Activated CD4-positive, alpha-beta T cell treated with anti-CD3 and anti-CD28 coated beads for 36 hours (primary cell): ENCODE measurements at regions of chr4 and their contacts with region 1.

Region 1: GRCh38 chr4:54971474-54971950 is 153.9 kb downstream of the KDR start:
- DNase-seq: no peak
- ATAC-seq: peak; percentile 71
- H3K4me3 Mint-ChIP-seq: no peak overlapping the region
- H3K27ac Mint-ChIP-seq: no peak overlapping the region
- H3K4me1 Mint-ChIP-seq: no peaks in the 10 kb centered on the region
- H3K27me3 Mint-ChIP-seq: peaks cover 1% of the 10 kb centered on the region

Region 2: DNA sequence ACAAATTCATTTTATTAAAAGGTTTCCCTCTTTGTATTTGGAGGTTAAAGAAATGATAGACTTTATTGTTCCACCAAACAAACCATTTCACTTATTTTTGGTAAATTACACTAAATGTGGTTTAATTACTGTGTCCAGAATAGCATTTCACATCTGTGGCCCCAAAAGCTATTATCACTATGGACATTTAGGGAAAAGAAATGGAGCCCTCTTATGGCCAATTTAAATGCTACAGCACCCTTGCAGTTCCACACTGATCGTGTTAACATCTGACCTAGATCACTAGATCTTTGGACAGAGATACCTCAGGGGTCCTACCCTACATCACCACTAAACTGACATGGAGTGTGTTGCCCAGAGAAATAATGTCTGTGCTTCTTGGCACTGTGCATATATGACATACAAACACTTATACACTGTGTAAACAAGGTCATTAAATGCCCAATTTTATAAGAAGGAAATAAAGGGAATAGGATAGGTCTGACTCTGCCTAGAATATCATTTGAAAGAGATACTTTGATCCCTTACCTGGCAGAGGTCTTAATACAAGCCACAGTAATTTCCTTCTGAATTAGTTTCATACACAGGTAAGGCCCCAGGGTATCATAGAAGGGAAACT is 10.0 kb before region 1 on chr4:
- CTCF ChIA-PET with region 1: interaction called, 16 read pairs
- POLR2A ChIA-PET with region 1: no interaction called
- intact Hi-C with region 1: no loop called
- DNase-seq: no peak
- ATAC-seq: peak; percentile 44
- H3K4me3 Mint-ChIP-seq: no peak overlapping the region
- H3K27ac Mint-ChIP-seq: no peak overlapping the region
- H3K4me1 Mint-ChIP-seq: peaks cover 14% of the 10 kb centered on the region
- H3K27me3 Mint-ChIP-seq: no peaks in the 10 kb centered on the region

Region 3: GRCh38 chr4:55321707-55322264 is 350.3 kb after region 1 on chr4:
- CTCF ChIA-PET with region 1: interaction called, 24 read pairs
- POLR2A ChIA-PET with region 1: no interaction called
- intact Hi-C with region 1: loop called (anchors 1 kb)
- DNase-seq: peak; percentile 85
- ATAC-seq: no peak
- H3K4me3 Mint-ChIP-seq: no peak overlapping the region
- H3K27ac Mint-ChIP-seq: no peak overlapping the region
- H3K4me1 Mint-ChIP-seq: peaks cover 35% of the 10 kb centered on the region
- H3K27me3 Mint-ChIP-seq: peaks cover 2% of the 10 kb centered on the region

Region 4: DNA sequence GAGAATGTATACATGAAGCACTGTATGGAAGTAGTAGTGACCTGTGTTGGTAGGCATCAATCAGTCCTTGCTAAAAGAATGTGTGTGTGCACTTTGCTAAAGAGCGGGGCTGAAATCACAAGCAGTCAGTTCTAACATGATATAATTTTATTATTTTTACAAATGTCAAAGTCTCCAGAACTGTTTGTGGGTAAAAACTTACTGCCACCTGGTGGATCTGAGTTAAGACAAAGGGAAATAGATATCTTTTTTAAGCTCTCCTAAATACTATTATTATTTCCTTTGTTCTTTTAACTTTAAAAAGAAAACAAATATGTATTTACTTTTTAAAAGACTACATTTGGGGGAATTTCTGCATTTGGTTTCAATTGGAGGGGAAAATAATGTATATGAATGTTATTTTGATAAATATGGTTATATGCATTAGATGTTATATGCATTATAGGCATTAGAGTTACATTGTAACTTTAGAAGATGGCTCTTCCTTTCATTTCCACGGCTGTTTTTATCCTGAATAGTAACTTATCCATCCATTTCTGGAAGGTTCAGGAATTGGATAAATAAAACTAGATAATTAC is 583.0 kb after region 1 on chr4:
- CTCF ChIA-PET with region 1: no interaction called
- POLR2A ChIA-PET with region 1: no interaction called
- intact Hi-C with region 1: loop called in 1 of 2 experiments (anchors 1 kb)
- DNase-seq: no peak
- ATAC-seq: no peak
- H3K4me3 Mint-ChIP-seq: no peak overlapping the region
- H3K27ac Mint-ChIP-seq: no peak overlapping the region
- H3K4me1 Mint-ChIP-seq: peaks cover 10% of the 10 kb centered on the region
- H3K27me3 Mint-ChIP-seq: peaks cover 24% of the 10 kb centered on the region

Region 5: GRCh38 chr4:55736605-55737183 is 765.2 kb after region 1 on chr4:
- CTCF ChIA-PET with region 1: no interaction called
- POLR2A ChIA-PET with region 1: no interaction called
- intact Hi-C with region 1: loop called in 1 of 2 experiments (anchors 2 kb)
- DNase-seq: no peak
- ATAC-seq: no peak
- H3K4me3 Mint-ChIP-seq: no peak overlapping the region
- H3K27ac Mint-ChIP-seq: no peak overlapping the region
- H3K4me1 Mint-ChIP-seq: no peaks in the 10 kb centered on the region
- H3K27me3 Mint-ChIP-seq: peaks cover 37% of the 10 kb centered on the region